Ovary (tissue), 10 donors: ENCODE measurements at regions of chr22 and their contacts with region 1.

Region 1: GRCh38 chr22:20016734-20017621 is at the start of gene ARVCF:
- DNase-seq: peak; percentile 86 to 94 (median 92)
- H3K4me3 ChIP-seq: peak within 1 kb of the TSS; percentile 57
- H3K27ac ChIP-seq: peak within 1 kb of the TSS in 1 of 2 donors; percentile 22
- H3K4me1 ChIP-seq: peaks cover 11% of the 10 kb centered on the region
- H3K27me3 ChIP-seq: no peaks in the 10 kb centered on the region
- CTCF ChIP-seq: peak in 2 of 3 donors; percentile 39 to 48
- EP300 ChIP-seq: no peak
- POLR2A ChIP-seq: no peak
- total RNA-seq, gene ARVCF: 9.0 to 23.8 (median 14.0) TPM

Region 2: DNA sequence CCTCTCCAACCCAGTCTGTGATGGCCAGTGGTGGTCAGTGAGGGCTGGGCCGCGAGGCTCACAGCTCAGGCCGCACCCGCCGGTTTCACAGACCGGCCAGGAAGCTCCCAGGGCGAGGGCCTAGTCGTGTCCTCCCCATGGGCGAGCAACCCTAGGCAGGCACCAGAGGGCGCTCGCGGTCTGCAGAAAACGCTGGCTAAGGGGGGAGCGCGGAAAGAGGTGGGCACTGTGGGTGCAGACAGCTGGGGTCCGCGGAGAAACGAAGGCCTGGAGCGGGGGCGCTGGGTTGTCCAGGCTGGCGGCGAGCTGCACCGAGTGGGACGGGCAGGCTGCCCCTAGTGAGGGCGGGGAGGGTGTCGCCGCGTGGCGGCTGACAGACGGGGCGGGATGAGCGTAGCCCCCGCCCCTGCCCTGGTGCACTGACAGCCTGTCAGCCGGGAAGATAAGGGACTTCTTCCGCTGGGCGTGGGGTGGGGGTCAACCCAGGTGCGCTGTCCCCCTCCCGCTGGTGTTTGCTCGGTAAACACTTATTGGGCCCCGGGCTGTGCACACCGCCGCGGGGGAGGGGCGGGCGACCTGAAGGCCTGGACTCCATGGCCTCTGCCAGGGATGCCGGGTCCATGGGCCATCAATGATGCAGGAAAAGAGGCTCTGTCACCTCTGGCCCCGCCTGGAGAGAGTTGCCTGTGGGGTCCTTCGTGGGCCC is 286.2 kb before region 1 on chr22:
- intact Hi-C with region 1: loop called in 1 of 4 experiments (anchors 5 kb)
- DNase-seq: peak; percentile 79 to 92 (median 89)
- H3K4me3 ChIP-seq: no peak overlapping the region
- H3K27ac ChIP-seq: no peak overlapping the region
- H3K4me1 ChIP-seq: no peaks in the 10 kb centered on the region
- H3K27me3 ChIP-seq: no peaks in the 10 kb centered on the region
- CTCF ChIP-seq: peak; percentile 89 to 97 (median 95)
- EP300 ChIP-seq: no peak
- POLR2A ChIP-seq: no peak

Region 3: GRCh38 chr22:20090348-20091240 is 73.6 kb after region 1 on chr22:
- intact Hi-C with region 1: loop called in 1 of 4 experiments (anchors 10 kb)
- DNase-seq: no peak
- H3K4me3 ChIP-seq: no peak overlapping the region
- H3K27ac ChIP-seq: no peak overlapping the region
- H3K4me1 ChIP-seq: no peaks in the 10 kb centered on the region
- H3K27me3 ChIP-seq: no peaks in the 10 kb centered on the region
- CTCF ChIP-seq: no peak
- EP300 ChIP-seq: no peak
- POLR2A ChIP-seq: no peak